IMR-90 (cell line): ENCODE measurements at regions of chr16 and their contacts with region 1.

Region 1: GRCh38 chr16:60203525-60204124 is 1469.5 kb upstream of the GOT2 start:
- DNase-seq: peak; percentile 2
- ATAC-seq: no peak
- H3K4me3 ChIP-seq: no peak overlapping the region
- H3K27ac ChIP-seq: no peak overlapping the region
- H3K4me1 ChIP-seq: no peaks in the 10 kb centered on the region
- H3K27me3 ChIP-seq: no peaks in the 10 kb centered on the region
- CTCF ChIP-seq: peak; percentile 43
- POLR2A ChIP-seq: no peak
- RAD21 ChIP-seq: peak; percentile 38

Region 2: DNA sequence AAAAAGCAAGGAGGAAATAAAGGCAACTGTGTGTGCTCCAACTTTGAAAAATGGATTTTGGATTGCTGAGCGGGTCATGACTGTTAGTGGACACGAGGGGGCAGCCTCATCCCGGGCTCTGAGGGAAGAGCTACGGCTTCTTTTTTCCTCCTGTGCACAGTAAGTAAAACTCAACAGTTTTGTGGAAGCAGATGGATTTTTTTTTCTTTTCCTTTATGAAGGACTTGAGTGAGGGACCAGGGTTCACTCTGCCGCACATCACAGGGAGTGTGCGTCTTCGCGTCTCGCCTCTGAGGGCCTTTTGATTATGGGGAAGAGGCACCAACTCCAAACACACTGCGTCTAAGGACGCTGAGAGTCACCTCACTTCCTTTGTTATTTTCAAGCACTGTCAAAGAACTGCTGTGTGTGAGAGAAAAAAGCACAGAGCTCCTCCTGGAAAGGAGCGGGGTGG is 1389.2 kb before region 1 on chr16:
- CTCF ChIA-PET with region 1: no interaction called
- POLR2A ChIA-PET with region 1: no interaction called
- dilution Hi-C with region 1: no loop called
- in situ Hi-C with region 1: no loop called
- intact Hi-C with region 1: loop called (anchors 1 kb)
- DNase-seq: peak; percentile 30
- ATAC-seq: peak; percentile 97
- H3K4me3 ChIP-seq: peak overlapping the region; percentile 37; the same call in 1 of the 2 replicates
- H3K27ac ChIP-seq: no peak overlapping the region
- H3K4me1 ChIP-seq: no peaks in the 10 kb centered on the region
- H3K27me3 ChIP-seq: no peaks in the 10 kb centered on the region
- CTCF ChIP-seq: peak; percentile 88
- POLR2A ChIP-seq: no peak
- RAD21 ChIP-seq: peak; percentile 89

Region 3: DNA sequence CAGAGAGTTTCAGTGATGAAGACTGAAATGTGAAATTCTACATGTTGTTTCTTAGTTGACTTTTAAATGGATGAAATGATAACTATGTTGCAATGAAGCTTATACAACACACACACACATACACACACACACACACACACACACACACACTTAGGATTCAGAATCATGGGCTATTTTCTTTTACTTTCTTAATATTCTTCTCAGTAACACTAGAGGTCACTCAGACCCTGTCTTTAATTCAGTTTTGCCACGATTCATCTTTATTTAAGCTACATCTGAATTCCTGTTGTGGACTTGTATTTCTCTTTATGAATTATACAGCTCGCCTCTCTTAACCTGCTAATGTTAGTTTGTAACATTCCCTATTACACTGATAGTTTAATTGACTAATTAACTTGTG is 1360.0 kb before region 1 on chr16:
- CTCF ChIA-PET with region 1: no interaction called
- POLR2A ChIA-PET with region 1: no interaction called
- dilution Hi-C with region 1: no loop called
- in situ Hi-C with region 1: no loop called
- intact Hi-C with region 1: loop called (anchors 10 kb)
- DNase-seq: peak; percentile 24
- ATAC-seq: 0 out of 2 replicates have a peak, but pooled peaks have one; percentile 24
- H3K4me3 ChIP-seq: no peak overlapping the region
- H3K27ac ChIP-seq: no peak overlapping the region
- H3K4me1 ChIP-seq: no peaks in the 10 kb centered on the region
- H3K27me3 ChIP-seq: no peaks in the 10 kb centered on the region
- CTCF ChIP-seq: peak; percentile 43
- POLR2A ChIP-seq: no peak
- RAD21 ChIP-seq: peak; percentile 51

Region 4: DNA sequence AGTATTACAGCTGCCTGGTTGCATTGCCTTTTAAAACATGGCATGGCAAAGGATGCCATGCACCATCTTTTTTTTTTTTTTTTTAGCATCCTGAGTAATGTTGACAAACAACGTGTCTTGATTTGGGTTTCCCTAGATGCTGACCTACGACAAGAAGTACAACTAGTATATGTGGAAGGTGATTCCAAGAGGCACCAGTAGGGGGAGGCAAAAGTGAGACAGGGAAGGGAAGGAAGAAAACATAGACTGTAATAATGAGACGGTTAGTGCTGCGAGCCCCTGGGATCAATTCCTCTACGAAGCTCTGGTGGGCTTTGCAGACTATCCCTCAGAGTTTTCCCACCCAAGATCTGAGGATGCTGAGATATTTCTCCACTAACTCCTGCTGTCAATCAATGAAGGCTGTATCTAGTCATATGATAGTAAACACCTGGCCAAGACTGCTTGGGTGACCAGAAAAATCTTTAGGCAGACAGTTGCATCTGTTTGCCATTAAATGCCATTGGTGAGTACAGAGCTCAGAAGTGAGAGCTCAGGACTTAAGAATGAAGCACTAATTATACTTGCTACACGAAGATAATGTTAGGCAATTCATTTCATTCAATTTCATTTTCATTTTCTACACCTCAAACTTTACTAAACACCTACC is 1011.0 kb before region 1 on chr16:
- CTCF ChIA-PET with region 1: no interaction called
- POLR2A ChIA-PET with region 1: no interaction called
- dilution Hi-C with region 1: no loop called
- in situ Hi-C with region 1: no loop called
- intact Hi-C with region 1: loop called (anchors 10 kb)
- DNase-seq: peak; percentile 11
- ATAC-seq: peak; percentile 66
- H3K4me3 ChIP-seq: no peak overlapping the region
- H3K27ac ChIP-seq: no peak overlapping the region
- H3K4me1 ChIP-seq: no peaks in the 10 kb centered on the region
- H3K27me3 ChIP-seq: no peaks in the 10 kb centered on the region
- CTCF ChIP-seq: peak; percentile 41
- POLR2A ChIP-seq: no peak
- RAD21 ChIP-seq: peak; percentile 50; the same call in 1 of the 2 replicates

Region 5: GRCh38 chr16:59411961-59412841 is 791.4 kb before region 1 on chr16:
- CTCF ChIA-PET with region 1: interaction called, 3 read pairs
- POLR2A ChIA-PET with region 1: no interaction called
- dilution Hi-C with region 1: no loop called
- in situ Hi-C with region 1: no loop called
- intact Hi-C with region 1: loop called (anchors 2 kb)
- DNase-seq: peak; percentile 30
- ATAC-seq: no peak
- H3K4me3 ChIP-seq: no peak overlapping the region
- H3K27ac ChIP-seq: no peak overlapping the region
- H3K4me1 ChIP-seq: no peaks in the 10 kb centered on the region
- H3K27me3 ChIP-seq: no peaks in the 10 kb centered on the region
- CTCF ChIP-seq: peak; percentile 54
- POLR2A ChIP-seq: no peak
- RAD21 ChIP-seq: peak; percentile 68